WTC11 (cell line): ENCODE measurements at regions of chr2 and their contacts with region 1.

Region 1: GRCh38 chr2:122519366-122519765 is 763.9 kb downstream of the TSN start:
- DNase-seq: no peak
- ATAC-seq: 0 out of 2 replicates have a peak, but pooled peaks have one; percentile 5
- H3K4me3 Mint-ChIP-seq: no peak overlapping the region
- H3K27ac Mint-ChIP-seq: peak overlapping the region; percentile 11; the same call in 1 of the 2 replicates
- H3K4me1 Mint-ChIP-seq: peaks cover 62% of the 10 kb centered on the region
- H3K27me3 Mint-ChIP-seq: peaks cover 2% of the 10 kb centered on the region; the same call in 1 of the 2 replicates
- CTCF ChIP-seq: peak; percentile 39

Region 2: GRCh38 chr2:122266636-122267035 is 252.7 kb before region 1 on chr2:
- CTCF ChIA-PET with region 1: no interaction called
- POLR2A ChIA-PET with region 1: no interaction called
- DNase-seq: no peak
- ATAC-seq: no peak
- H3K4me3 Mint-ChIP-seq: no peak overlapping the region
- H3K27ac Mint-ChIP-seq: no peak overlapping the region
- H3K4me1 Mint-ChIP-seq: no peaks in the 10 kb centered on the region
- H3K27me3 Mint-ChIP-seq: no peaks in the 10 kb centered on the region; the same call in 1 of the 2 replicates
- CTCF ChIP-seq: no peak

Region 3: DNA sequence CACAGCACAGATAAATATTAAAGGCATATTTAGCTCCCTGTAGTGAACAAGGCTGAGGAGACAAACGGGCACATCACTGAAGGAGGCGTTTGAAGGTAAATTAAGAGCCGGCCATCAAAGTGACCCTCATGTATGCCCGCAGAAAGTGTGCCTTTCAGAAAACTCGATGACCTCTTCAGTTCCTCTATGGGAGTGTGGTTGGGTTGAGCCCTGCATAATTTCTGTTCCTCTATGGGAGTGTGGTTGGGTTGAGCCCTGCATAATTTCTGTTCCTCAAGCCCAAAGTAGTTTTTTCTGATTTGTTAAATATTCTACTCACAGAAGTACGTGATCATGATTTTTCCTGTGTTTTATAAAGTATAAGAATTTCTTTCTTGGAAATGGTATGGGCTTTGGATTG is 195.4 kb before region 1 on chr2:
- CTCF ChIA-PET with region 1: no interaction called
- POLR2A ChIA-PET with region 1: no interaction called
- DNase-seq: no peak
- ATAC-seq: no peak
- H3K4me3 Mint-ChIP-seq: no peak overlapping the region
- H3K27ac Mint-ChIP-seq: no peak overlapping the region
- H3K4me1 Mint-ChIP-seq: peaks cover 8% of the 10 kb centered on the region
- H3K27me3 Mint-ChIP-seq: no peaks in the 10 kb centered on the region
- CTCF ChIP-seq: no peak

Region 4: GRCh38 chr2:122531290-122532071 is 12.1 kb after region 1 on chr2:
- CTCF ChIA-PET with region 1: interaction called, 33 read pairs
- POLR2A ChIA-PET with region 1: no interaction called
- DNase-seq: peak; percentile 92
- ATAC-seq: peak; percentile 100
- H3K4me3 Mint-ChIP-seq: no peak overlapping the region
- H3K27ac Mint-ChIP-seq: no peak overlapping the region
- H3K4me1 Mint-ChIP-seq: peaks cover 14% of the 10 kb centered on the region
- H3K27me3 Mint-ChIP-seq: no peaks in the 10 kb centered on the region; the same call in 1 of the 2 replicates
- CTCF ChIP-seq: peak; percentile 96

Region 5: DNA sequence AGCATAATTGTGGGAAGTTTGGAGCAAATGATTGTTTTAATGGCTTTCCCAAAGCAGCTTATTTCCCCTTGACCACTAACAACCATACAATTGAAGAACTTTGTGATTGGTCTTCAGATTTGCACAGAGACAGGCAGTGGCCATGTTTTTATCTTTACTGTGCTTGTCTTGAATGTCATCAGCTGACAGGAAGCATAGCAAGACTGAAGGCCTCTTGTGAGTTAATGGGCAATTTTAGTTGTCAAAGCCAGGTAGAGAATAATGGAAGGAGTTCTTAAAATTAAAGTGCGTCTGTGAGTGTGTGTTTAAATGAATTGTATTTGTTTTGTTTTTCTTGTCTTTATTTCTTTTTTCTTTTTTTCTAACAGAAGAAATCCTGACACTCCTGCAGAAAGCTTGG is 46.0 kb after region 1 on chr2:
- CTCF ChIA-PET with region 1: no interaction called
- POLR2A ChIA-PET with region 1: no interaction called
- DNase-seq: no peak
- ATAC-seq: no peak
- H3K4me3 Mint-ChIP-seq: no peak overlapping the region
- H3K27ac Mint-ChIP-seq: no peak overlapping the region
- H3K4me1 Mint-ChIP-seq: no peaks in the 10 kb centered on the region
- H3K27me3 Mint-ChIP-seq: no peaks in the 10 kb centered on the region
- CTCF ChIP-seq: no peak